Heart right ventricle (tissue), 16 donors: ENCODE measurements at regions of chr18 and their contacts with region 1.

Region 1: DNA sequence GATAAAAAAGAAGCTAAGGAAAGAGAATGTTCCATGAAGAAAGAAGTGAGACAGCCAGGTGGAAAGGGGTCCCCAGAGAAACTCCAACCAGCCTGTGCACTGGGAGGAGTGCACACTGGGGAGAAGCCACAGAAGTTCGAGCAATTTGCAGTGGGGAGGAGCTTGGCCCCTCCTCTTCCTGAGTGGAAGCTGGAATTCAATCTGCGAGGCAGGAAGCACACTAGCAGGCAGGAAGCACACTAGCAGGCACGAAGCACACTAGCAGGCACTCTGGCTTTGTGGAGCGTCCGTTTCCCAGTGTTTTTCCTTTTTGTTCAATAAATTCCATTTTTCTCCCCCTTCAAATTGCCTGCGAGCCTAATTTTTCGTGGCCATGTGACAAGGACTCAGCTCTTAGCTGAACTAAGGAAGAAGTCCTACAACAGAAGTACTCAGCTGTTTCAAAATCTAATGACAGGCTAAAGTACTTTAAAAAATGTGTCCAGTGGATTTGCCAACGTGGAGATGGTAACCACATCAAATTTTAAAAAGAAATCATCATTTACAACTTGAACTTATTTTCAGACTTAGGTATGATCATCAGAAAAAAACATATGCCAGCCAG is 21.4 kb upstream of the SPIRE1 start:
- DNase-seq: peak; percentile 46 to 82
- ATAC-seq: peak; percentile 92 to 99 (median 98)
- H3K4me3 ChIP-seq: peak overlapping the region in 7 of 10 donors; percentile 14 to 41 (median 32)
- H3K27ac ChIP-seq: peak overlapping the region; percentile 6 to 91 (median 85)
- H3K4me1 ChIP-seq: peaks cover 3 to 18% (median 13%) of the 10 kb centered on the region in 9 donors
- H3K27me3 ChIP-seq: no peaks in the 10 kb centered on the region
- CTCF ChIP-seq: no peak

Region 2: GRCh38 chr18:12702221-12703095 is 23.2 kb after region 1 on chr18 and contains the starts of genes CEP76 and PSMG2:
- intact Hi-C with region 1: loop called in 2 of 10 experiments (anchors 2 kb)
- DNase-seq: peak; percentile 93 to 94
- ATAC-seq: peak; percentile 95 to 97 (median 97)
- H3K4me3 ChIP-seq: peak within 1 kb of the TSS; percentile 70 to 96 (median 93)
- H3K27ac ChIP-seq: peak within 1 kb of the TSS; percentile 94 to 99 (median 96)
- H3K4me1 ChIP-seq: peaks cover 4 to 45% (median 31%) of the 10 kb centered on the region in 9 donors
- H3K27me3 ChIP-seq: no peaks in the 10 kb centered on the region
- CTCF ChIP-seq: no peak
- total RNA-seq, gene CEP76: 2.7 to 5.9 (median 4.0) TPM
- total RNA-seq, gene PSMG2: 36.2 to 51.8 (median 46.0) TPM

Region 3: DNA sequence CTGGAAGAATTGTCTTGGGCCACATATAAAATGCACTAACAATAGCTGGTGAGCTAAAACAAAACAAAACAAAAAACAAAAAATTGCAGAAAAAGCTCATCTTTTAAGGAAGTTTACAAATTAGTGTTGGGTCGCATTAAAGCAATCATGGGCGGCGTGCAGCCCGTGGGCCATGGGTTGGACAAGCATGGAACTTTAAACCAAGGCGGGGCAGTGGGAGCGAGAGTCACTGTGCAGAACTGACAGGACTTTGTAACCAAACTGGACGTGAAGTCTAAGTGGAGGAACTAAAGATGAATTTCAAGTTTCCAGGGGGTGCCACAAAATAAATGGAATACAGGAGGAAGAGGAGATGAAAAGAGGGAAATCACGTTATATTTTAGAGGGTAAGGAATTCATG is 104.2 kb after region 1 on chr18:
- intact Hi-C with region 1: no loop called
- DNase-seq: no peak
- ATAC-seq: no peak
- H3K4me3 ChIP-seq: no peak overlapping the region
- H3K27ac ChIP-seq: no peak overlapping the region
- H3K4me1 ChIP-seq: no peaks in the 10 kb centered on the region
- H3K27me3 ChIP-seq: no peaks in the 10 kb centered on the region
- CTCF ChIP-seq: no peak